ENCODE measurements at regions of chr16 and their contacts with region 1.

Region 1: DNA sequence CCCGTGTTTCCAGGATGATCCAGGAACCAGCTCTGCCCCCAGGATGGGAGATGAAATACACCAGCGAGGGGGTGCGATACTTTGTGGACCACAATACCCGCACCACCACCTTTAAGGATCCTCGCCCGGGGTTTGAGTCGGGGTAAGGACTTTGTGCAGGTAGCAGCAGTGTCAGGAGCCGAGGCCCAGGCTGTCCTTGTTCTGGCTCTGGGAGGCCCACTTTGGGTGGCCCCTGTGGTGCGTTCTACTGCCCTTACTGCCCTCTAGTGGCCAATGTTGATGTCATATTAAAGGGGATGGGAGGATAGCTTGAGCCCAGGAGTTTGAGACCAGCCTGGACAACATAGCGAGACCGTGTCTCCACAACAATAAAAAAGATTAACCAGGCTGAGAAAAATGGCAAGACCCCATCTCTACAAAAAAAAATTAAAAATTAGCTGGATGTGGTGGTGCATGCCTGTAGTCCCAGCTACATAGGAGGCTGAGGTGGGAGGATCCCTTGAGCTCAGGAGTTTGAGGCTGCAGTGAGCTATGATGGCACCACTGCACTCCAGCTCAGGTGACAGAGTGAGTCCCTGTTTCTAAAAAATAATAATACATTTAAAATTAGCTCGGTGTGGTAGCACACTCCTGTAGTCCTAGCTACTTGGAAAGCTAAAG is 20.9 kb upstream of the CLEC18A start:
- DNase-seq: peak; percentile 69
- ATAC-seq: peak; percentile 72
- H3K4me3 ChIP-seq: no peak overlapping the region
- H3K4me3 Mint-ChIP-seq: no peak overlapping the region
- H3K27ac ChIP-seq: no peak overlapping the region
- H3K27ac Mint-ChIP-seq: no peak overlapping the region
- H3K4me1 ChIP-seq: no peaks in the 10 kb centered on the region
- H3K4me1 Mint-ChIP-seq: no peaks in the 10 kb centered on the region
- H3K27me3 ChIP-seq: no peaks in the 10 kb centered on the region
- H3K27me3 Mint-ChIP-seq: no peaks in the 10 kb centered on the region
- CTCF ChIP-seq: peak; percentile 82

Region 2: DNA sequence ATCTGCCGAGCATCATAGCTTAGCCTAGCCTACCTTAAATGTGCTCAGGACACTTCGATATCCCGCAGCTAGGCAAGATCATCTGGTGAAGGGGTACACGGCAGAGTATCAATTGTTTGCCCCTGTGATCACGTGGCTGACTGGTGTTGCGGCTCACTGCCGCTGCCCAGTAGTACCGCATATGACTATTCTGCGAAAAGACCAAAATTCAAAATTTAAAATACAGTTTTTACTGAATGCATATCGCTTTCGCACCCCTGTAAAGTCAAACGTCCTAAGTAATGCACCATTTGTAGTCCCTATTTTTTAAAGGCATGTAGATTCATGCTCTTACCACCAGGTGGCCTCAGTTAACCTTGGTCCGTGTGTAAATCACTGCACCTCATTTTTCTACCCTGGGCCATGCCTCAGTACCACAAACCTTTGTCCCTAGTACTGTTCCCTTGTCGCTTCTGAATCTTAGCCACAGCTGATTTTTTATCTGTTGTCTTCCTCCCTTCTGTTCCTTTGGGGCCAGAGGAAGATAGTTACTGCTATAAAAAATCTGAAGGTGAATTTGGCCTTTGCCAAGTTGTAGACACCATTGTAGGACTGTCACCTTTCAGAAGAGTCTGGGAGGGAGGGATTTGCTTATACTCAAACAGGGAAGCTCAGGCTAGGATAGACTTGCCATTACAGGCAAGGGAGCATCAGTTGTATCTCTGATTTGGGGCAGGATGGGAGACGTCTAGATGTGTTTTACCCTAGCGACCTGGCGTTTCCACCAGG is 133.7 kb before region 1 on chr16:
- CTCF ChIA-PET with region 1: interaction called, 54 read pairs
- POLR2A ChIA-PET with region 1: no interaction called
- intact Hi-C with region 1: no loop called
- DNase-seq: peak; percentile 66
- ATAC-seq: peak; percentile 77
- H3K4me3 ChIP-seq: no peak overlapping the region
- H3K4me3 Mint-ChIP-seq: no peak overlapping the region
- H3K27ac ChIP-seq: no peak overlapping the region
- H3K27ac Mint-ChIP-seq: no peak overlapping the region
- H3K4me1 ChIP-seq: no peaks in the 10 kb centered on the region
- H3K4me1 Mint-ChIP-seq: peaks cover 11% of the 10 kb centered on the region
- H3K27me3 ChIP-seq: no peaks in the 10 kb centered on the region
- H3K27me3 Mint-ChIP-seq: no peaks in the 10 kb centered on the region
- CTCF ChIP-seq: peak; percentile 96

Region 3: GRCh38 chr16:69917739-69918138 is 12.5 kb before region 1 on chr16:
- CTCF ChIA-PET with region 1: interaction called, 22 read pairs
- POLR2A ChIA-PET with region 1: no interaction called
- intact Hi-C with region 1: no loop called
- DNase-seq: no peak
- ATAC-seq: no peak
- H3K4me3 ChIP-seq: no peak overlapping the region
- H3K4me3 Mint-ChIP-seq: no peak overlapping the region
- H3K27ac ChIP-seq: no peak overlapping the region
- H3K27ac Mint-ChIP-seq: no peak overlapping the region
- H3K4me1 ChIP-seq: no peaks in the 10 kb centered on the region
- H3K4me1 Mint-ChIP-seq: no peaks in the 10 kb centered on the region
- H3K27me3 ChIP-seq: no peaks in the 10 kb centered on the region
- H3K27me3 Mint-ChIP-seq: no peaks in the 10 kb centered on the region
- CTCF ChIP-seq: no peak